ENCODE measurements at regions of chr7 and their contacts with region 1.

Region 1: GRCh38 chr7:107025449-107026103 is 18.9 kb upstream of the PRKAR2B start:
- DNase-seq: no peak
- H3K4me3 ChIP-seq: no peak overlapping the region
- H3K27ac ChIP-seq: no peak overlapping the region
- H3K4me1 ChIP-seq: no peaks in the 10 kb centered on the region
- H3K27me3 ChIP-seq: no peaks in the 10 kb centered on the region
- CTCF ChIP-seq: no peak
- POLR2A ChIP-seq: no peak

Region 2: DNA sequence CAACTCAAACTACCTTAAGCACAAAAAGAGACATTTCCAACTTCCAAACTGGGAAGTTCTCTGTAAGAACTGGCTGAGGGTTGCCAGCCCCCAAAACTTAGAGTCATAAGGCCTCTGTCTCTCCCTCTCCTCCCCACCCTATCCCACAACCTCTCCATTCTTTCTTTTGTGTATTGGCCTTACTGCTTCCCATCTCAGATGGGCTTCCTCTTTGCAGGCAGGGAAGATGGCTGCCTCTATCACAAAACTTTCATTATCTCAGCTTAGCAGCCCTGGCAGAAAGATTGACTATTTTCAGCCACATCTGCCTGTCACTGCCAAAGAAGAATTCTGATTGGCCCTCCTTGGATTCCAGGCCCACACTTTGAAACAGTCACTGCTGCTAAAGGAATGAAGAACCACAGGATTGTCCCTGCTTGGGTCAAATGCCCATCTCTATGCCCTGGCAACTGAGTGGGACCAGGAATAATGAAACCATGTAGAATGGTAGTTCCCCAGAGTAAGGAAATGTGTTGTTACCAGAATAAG is 39.1 kb before region 1 on chr7:
- CTCF ChIA-PET with region 1: interaction called, 3 read pairs
- POLR2A ChIA-PET with region 1: interaction called, 15 read pairs
- dilution Hi-C with region 1: no loop called
- intact Hi-C with region 1: no loop called
- DNase-seq: no peak
- H3K4me3 ChIP-seq: no peak overlapping the region
- H3K27ac ChIP-seq: no peak overlapping the region
- H3K4me1 ChIP-seq: no peaks in the 10 kb centered on the region
- H3K27me3 ChIP-seq: no peaks in the 10 kb centered on the region
- CTCF ChIP-seq: no peak
- POLR2A ChIP-seq: no peak

Measured in endothelial cell of umbilical vein (primary cell).